ENCODE measurements at regions of chr12 and their contacts with region 1.

Region 1: GRCh38 chr12:292186-292585 is 29.6 kb upstream of the SLC6A13 start:
- DNase-seq: no peak
- ATAC-seq: no peak
- H3K4me3 Mint-ChIP-seq: no peak overlapping the region
- H3K27ac Mint-ChIP-seq: peak overlapping the region in 3 of 10 donors; percentile 3 to 29 (median 21)
- H3K4me1 Mint-ChIP-seq: peaks cover 20 to 28% (median 21%) of the 10 kb centered on the region in 4 donors
- H3K27me3 Mint-ChIP-seq: no peaks in the 10 kb centered on the region

Region 2: DNA sequence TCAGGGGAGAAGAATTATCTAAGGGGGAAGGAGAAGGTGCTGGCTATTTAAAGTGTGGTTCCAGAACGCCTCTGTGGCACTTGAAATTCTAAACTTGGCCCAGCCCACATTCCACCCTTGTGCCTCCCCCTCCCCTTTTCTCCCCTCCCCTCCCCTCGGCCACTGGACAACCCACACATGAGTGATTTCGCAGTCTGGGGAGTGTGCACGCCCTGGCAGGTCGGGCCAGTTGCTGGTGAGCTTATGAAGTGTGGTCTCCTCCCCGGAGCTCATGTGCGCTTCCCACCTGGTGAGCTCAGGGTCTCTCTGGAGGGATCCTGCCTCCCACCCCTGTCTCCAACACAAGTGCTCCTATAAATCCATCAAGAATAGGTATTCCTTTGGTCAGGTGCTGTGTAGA is 29.4 kb before region 1 on chr12 and contains the start of gene SLC6A13:
- POLR2A ChIA-PET with region 1: no interaction called
- DNase-seq: no peak
- ATAC-seq: no peak
- H3K4me3 Mint-ChIP-seq: peak within 1 kb of the TSS in 4 of 10 donors; percentile 8 to 62 (median 28)
- H3K27ac Mint-ChIP-seq: peak within 1 kb of the TSS in 3 of 10 donors; percentile 33 to 92 (median 66)
- H3K4me1 Mint-ChIP-seq: peaks cover 4 to 31% (median 26%) of the 10 kb centered on the region in 4 donors
- H3K27me3 Mint-ChIP-seq: peaks cover 0 to 15% (median 9%) of the 10 kb centered on the region in 5 donors
- polyA plus RNA-seq, gene SLC6A13: 0.51 TPM in 1 of 3 donors, not detected in the others

Region 3: DNA sequence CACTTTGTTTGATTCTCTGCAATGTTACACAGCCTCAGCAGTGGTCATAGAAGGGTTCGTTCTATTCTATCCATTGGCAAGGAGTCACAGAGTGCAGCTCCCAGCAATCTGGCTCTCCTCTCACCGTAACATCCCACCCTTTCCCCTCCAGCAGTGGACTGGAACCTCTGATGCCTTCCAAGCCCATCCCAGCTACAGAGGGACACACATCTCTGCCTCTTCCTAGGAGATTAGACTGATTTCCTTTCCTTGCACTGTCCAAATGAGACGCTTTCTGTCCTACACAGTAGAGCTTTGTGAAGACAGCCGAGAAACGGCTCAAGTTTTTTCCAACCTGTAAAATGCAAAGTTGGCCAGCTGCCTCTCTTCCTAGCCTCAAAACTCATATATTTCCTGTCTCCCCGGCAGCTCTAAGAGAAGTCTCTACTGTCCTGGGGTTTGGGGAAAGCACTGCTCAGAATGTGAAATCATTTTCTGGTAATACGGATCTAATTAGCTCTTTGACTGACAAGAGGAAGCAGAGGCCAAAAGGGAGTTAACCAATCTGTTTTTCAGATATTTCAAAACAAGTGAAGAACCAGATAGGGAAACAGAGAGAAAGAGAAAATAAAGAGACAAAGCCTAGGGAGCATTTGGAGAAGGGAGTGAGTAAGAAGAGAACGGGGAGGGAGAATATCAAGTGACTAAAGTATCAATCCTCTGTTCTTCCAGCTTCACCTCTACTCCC is 370.5 kb after region 1 on chr12:
- POLR2A ChIA-PET with region 1: no interaction called
- DNase-seq: no peak
- ATAC-seq: peak; percentile 9 to 20
- H3K4me3 Mint-ChIP-seq: peak overlapping the region; percentile 26 to 83 (median 64)
- H3K27ac Mint-ChIP-seq: peak overlapping the region in 8 of 10 donors; percentile 14 to 88 (median 58)
- H3K4me1 Mint-ChIP-seq: peaks cover 27 to 62% (median 33%) of the 10 kb centered on the region in 4 donors
- H3K27me3 Mint-ChIP-seq: no peaks in the 10 kb centered on the region

Region 4: GRCh38 chr12:2179953-2180736 is 1888.0 kb after region 1 on chr12:
- POLR2A ChIA-PET with region 1: interaction called, 10 read pairs
- DNase-seq: no peak
- ATAC-seq: no peak
- H3K4me3 Mint-ChIP-seq: no peak overlapping the region
- H3K27ac Mint-ChIP-seq: no peak overlapping the region
- H3K4me1 Mint-ChIP-seq: peaks cover 2 to 9% (median 4%) of the 10 kb centered on the region in 4 donors
- H3K27me3 Mint-ChIP-seq: peaks cover 2 to 45% (median 12%) of the 10 kb centered on the region in 5 donors